HEK293T (cell line): ENCODE measurements at regions of chr2 and their contacts with region 1.

Region 1: DNA sequence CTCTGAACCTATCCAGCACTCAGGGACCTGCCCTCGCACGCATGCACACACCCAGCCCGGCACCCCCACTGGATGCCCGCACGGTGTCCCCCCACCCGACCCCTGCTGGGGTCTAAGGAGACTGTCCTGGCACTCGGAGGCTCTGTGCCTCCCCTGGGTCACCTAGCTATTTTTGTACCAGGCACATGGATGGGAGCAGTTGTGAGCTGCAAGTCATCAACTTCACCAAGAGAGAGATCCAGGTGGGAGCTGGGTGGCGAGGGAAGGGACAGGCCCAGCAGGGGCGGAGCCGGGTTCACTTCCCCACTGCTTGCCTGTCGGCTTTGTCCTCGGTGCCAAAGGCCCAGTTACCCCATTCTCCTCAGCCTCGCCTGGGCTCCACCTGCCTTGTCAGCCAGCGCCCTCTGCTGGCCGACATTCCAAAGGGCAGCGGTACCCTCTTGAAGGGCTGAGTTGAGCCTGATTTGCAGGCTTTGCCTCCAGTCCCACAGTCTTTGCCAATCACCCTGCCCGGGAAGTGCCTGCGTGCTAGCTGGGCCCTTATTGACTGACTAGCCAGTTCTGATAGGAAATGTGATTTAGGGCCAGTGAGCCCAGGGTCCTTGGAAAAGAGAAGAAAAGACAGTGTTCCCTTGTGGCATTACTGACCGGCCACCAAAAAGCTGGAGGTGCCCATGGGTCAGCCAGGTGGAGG is 5.8 kb downstream of the NT5DC4 start:
- DNase-seq: peak; percentile 92

Region 2: DNA sequence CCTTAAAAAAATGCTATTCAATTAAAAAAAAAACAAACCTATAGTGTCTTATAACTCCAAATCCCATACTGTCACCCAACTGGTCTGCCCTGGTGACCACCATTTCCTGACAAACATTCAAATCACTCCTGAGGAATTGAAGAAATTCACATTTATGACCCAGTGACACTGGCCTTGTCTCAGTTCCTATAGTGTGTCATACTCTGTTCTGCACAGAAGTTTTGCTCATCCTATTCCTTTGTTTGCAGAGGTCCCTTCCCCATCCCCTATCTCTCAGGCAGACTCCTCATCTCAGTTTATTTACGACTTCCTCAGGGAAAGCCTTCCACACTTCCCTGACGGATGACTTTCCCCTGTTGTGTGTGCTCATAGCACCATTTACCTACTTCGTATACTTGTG is 436.6 kb before region 1 on chr2:
- CTCF ChIA-PET with region 1: no interaction called
- POLR2A ChIA-PET with region 1: no interaction called
- DNase-seq: no peak

Region 3: DNA sequence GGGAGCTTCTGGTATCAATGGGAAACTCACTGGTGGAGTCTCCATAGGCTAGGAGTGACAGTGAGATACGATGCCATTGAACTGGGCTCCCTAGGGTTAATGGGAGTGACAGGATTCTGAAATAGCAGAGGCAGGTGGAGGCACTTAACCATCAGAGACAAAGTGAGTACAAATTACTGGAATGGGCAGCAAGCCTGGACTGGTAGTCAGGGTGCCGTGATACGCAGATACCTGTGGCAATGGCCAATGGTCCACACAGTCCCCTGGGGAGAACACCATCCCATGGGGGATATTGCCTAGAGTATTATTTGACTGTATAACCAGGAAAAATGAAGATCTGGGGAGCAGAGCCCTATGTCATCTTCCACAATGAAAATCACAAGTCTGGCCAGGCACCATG is 124.9 kb before region 1 on chr2:
- CTCF ChIA-PET with region 1: interaction called, 27 read pairs
- POLR2A ChIA-PET with region 1: no interaction called
- DNase-seq: no peak

Region 4: GRCh38 chr2:112626604-112627059 is 100.0 kb before region 1 on chr2:
- CTCF ChIA-PET with region 1: interaction called, 92 read pairs
- POLR2A ChIA-PET with region 1: no interaction called
- DNase-seq: peak; percentile 68

Region 5: DNA sequence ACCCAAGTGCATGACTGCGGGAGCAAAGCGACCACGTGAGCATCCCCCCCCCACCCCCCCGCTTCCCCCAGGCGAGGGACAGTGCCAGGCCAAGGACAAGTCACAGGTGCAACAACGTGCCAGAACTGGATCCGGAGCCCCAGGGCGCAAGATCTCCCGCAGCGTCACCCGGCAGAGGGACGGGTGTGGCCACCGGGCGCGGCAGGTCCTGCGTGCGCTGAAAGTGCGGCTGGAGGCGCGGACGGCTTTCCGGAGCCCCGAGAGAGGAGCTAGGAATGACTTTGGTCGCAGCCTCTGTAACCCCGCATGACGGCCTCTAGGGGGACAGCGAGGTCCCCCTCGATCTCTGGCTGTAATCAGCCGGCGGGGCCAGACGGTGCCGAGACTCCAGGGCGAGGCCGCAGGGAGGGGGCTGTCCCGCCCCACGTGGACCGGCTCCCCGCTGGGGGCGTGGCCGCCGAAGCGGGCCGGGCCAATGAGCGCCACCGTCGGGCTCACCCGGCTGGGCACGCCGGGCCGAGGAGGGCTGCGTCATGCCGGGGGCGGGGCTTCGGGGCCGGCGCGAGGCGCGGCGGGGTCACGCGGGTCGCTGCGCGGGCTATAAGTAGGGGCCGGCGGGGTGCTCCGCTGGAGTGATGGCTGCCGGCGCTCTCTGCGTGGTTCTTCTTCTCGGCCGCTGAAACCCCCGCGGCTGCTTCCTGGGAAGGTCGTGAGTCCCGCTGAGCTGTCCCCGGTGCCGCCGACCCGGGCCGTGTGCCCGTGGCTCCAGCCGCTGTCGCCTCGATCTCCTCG is 81.1 kb before region 1 on chr2 and contains the start of gene SLC20A1:
- CTCF ChIA-PET with region 1: interaction called, 11 read pairs
- POLR2A ChIA-PET with region 1: interaction called, 5 read pairs
- DNase-seq: peak; percentile 98

Region 6: DNA sequence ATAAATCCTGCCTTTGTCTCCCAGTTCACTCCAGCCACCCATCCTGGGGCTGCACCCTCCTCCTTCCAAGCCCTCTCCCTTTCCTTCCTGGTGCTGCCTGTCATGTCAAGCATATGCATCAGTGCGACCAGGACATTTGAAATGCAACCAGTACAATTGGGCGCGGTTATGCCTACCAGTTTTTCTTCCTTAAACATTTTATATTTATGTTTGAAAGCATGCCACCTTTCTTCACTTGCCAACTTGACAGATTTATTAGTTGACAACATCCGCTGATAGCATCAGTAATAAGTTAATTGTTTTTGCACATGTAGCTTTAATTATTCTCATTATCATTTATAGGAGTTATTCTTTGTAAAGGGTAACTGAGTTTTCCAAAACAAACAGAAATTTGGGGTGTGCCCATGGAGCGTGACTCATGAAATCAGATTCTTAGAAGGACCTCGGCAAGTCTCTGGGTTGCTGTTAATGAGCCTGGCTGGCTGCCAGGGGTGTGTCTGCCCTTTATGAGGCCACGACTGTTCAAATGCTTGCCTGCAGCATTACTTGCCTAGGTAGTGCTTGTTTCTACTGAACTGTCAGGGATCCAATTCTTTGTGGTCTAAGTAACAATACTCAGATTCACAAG is 142.7 kb after region 1 on chr2:
- CTCF ChIA-PET with region 1: no interaction called
- POLR2A ChIA-PET with region 1: no interaction called
- DNase-seq: peak; percentile 49

Region 7: DNA sequence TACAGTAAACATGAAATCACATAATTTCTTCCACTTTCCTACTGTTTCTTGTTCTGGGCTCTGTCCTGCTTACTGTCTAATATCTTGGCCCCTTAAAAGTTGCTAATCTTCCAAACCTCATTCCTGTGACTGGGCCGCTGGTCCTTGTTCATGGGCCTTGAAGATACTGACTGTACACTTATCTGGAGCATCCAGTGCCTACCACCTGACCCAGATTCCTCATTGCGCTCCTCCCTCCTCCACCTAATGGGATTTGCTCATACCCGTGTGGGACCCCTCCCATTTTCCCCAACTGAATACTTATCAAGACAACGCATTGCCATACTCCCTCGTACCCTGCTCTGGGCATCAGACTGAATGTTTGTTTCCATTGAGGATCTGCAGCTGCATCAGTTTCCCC is 178.2 kb after region 1 on chr2:
- CTCF ChIA-PET with region 1: interaction called, 10 read pairs
- POLR2A ChIA-PET with region 1: no interaction called
- DNase-seq: no peak